HEK293T (cell line): ENCODE measurements at regions of chr15 and their contacts with region 1.

Region 1: DNA sequence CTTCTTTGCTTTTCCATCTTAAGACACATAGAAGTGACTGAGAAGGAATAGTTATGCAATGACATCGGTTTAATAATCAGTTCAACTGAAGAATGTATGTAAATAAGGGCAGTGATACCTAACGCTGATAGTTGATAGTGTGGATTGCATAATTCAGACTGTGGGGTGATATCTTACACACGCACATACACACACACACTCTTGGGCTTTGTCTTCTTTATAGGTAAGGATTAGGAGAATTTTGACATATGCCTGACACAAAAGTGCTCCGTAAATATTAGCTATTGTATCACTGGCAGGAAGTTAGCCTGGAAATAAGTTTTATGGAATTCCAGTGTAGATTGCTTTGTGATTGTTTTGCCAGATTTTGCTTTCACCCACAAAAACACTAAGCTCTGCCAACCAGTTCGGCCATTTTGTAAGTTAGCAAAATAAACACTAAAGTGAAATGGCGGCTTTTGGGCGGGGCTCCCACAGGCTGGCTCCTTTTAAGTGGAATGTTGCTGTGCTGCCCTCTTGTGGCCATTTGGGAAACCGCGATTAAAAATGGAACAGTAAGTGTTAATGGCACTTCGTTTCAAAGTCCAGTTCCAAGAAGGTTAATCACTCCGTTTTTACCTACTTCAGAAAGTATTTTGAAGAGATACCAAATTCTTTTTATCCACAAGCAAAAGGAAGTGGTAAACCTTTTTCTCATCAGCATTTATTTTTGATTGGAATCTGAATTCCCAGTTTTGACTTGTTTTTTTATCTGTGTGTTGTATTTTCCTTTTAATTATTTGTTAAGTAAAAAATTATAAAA is 17.7 kb downstream of the CHD2 start:
- DNase-seq: peak; percentile 77

Region 2: DNA sequence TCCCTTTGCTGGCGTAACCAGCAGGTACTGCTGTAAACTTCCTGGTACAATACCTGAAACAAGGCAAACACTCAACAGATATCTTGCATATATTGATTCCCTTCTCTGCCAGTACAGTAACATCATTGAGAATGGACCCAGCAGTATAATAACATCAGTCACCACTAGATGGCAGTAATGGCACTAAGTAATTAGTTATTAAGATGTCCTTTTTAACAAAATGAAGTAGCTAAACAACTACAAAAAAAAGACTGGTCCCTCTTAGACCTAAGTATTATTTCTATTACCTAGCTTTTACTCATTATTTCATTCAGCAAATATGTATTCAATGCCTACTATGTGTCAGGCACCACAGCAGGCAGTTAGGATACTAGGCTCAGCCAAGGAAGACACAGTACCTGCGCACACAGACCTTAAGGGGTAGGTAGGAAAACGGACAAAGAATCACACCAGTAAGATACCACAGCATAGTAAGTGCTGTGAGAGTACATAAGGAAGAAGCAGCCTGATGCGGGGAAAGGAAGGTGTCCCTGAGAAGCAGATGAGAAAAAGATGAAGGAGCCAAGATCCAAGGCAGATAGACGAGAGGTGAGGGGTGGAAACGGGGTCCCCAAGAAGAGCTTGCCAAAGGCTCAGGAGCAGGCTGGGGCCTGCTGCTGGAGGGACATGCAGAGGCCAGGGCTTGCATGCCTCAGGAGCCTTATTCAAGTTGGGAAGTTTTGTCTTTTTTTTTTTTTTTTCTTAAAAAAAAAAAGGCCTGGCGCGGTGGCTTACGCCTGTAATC is 120.4 kb before region 1 on chr15:
- CTCF ChIA-PET with region 1: interaction called, 31 read pairs
- POLR2A ChIA-PET with region 1: no interaction called
- DNase-seq: peak; percentile 59

Region 3: DNA sequence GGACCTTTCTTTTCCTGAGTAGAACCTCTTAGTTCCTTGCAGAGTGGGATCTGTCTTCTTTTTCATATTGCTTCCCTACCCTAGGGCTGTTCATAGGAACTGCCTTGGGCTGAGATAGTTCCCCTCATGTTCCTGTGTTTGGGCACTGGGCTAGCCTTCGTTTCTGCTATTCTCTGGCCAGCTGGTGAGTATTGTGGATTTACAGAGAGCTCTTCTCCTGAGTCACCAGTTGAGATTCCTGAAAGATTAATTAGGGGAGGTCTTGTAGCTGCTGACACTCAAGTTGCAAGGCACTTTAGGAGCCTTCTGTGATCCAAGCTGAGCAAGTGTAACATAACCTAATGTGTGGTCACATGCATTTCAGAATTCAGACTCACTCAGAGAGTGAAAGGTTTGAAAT is 13.0 kb after region 1 on chr15:
- CTCF ChIA-PET with region 1: no interaction called
- POLR2A ChIA-PET with region 1: no interaction called
- DNase-seq: no peak